ENCODE measurements at regions of chrX and their contacts with region 1.

Region 1: GRCh38 chrX:124217304-124218251 is 114.9 kb upstream of the TEX13D start:
- DNase-seq: peak; percentile 79
- ATAC-seq: peak; percentile 92
- H3K4me3 Mint-ChIP-seq: peak overlapping the region; percentile 71
- H3K27ac Mint-ChIP-seq: peak overlapping the region; percentile 96
- H3K4me1 Mint-ChIP-seq: peaks cover 85% of the 10 kb centered on the region
- H3K27me3 Mint-ChIP-seq: no peaks in the 10 kb centered on the region

Region 2: GRCh38 chrX:123878252-123878721 is 339.3 kb before region 1 on chrX:
- CTCF ChIA-PET with region 1: no interaction called
- POLR2A ChIA-PET with region 1: no interaction called
- intact Hi-C with region 1: loop called in 1 of 2 experiments (anchors 5 kb)
- DNase-seq: no peak
- ATAC-seq: peak; percentile 17
- H3K4me3 Mint-ChIP-seq: peak overlapping the region; percentile 8
- H3K27ac Mint-ChIP-seq: no peak overlapping the region
- H3K4me1 Mint-ChIP-seq: peaks cover 28% of the 10 kb centered on the region
- H3K27me3 Mint-ChIP-seq: no peaks in the 10 kb centered on the region

Region 3: DNA sequence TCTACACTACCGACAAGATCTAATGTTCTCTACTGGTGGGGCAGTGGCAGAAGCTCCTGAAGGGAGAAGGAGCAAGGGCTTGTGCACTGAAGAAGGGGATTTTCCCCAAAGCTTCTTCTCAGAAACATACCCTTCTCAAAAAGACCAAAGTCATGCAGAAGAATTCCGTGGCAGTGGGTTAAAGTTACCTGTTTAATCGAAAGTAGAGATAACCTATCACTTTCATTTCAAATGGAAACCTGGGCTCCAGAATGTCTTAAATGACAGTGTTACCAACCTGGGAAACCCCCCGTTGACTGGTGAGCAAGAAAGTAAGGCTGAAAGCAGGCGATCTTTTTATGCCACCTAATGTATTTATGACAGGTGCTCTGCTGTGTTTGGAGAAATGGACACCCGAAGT is 22.3 kb after region 1 on chrX:
- CTCF ChIA-PET with region 1: interaction called, 4 read pairs
- POLR2A ChIA-PET with region 1: interaction called, 7 read pairs
- intact Hi-C with region 1: loop called (anchors 1 kb)
- DNase-seq: peak; percentile 72
- ATAC-seq: peak; percentile 79
- H3K4me3 Mint-ChIP-seq: peak overlapping the region; percentile 31
- H3K27ac Mint-ChIP-seq: peak overlapping the region; percentile 75
- H3K4me1 Mint-ChIP-seq: peaks cover 45% of the 10 kb centered on the region
- H3K27me3 Mint-ChIP-seq: peaks cover 2% of the 10 kb centered on the region

Region 4: GRCh38 chrX:124300405-124300804 is 82.8 kb after region 1 on chrX:
- CTCF ChIA-PET with region 1: no interaction called
- POLR2A ChIA-PET with region 1: no interaction called
- intact Hi-C with region 1: loop called (anchors 5 kb)
- DNase-seq: no peak
- ATAC-seq: peak; percentile 70
- H3K4me3 Mint-ChIP-seq: peak overlapping the region; percentile 38
- H3K27ac Mint-ChIP-seq: peak overlapping the region; percentile 60
- H3K4me1 Mint-ChIP-seq: peaks cover 19% of the 10 kb centered on the region
- H3K27me3 Mint-ChIP-seq: no peaks in the 10 kb centered on the region

Region 5: DNA sequence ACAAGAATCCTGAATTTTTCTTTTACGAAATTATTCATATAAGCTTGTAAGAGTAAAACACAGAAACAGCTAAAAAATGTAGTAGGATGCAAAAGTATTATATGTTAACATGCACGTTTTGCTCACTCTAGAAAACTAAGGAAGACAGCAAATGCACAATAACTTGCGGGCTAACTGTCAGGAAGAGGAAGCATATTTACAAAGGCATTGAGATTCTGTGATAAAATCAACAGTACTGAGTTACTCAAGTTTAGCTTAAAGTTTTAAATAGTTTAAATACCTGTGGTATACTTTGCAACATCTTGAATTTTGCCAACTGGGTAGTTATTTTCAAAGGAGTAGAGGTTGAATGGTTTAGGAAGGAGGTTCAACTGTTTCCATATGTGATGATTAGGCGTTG is 165.8 kb after region 1 on chrX:
- CTCF ChIA-PET with region 1: no interaction called
- POLR2A ChIA-PET with region 1: no interaction called
- intact Hi-C with region 1: no loop called
- DNase-seq: no peak
- ATAC-seq: no peak
- H3K4me3 Mint-ChIP-seq: no peak overlapping the region
- H3K27ac Mint-ChIP-seq: no peak overlapping the region
- H3K4me1 Mint-ChIP-seq: peaks cover 34% of the 10 kb centered on the region
- H3K27me3 Mint-ChIP-seq: no peaks in the 10 kb centered on the region

Region 6: DNA sequence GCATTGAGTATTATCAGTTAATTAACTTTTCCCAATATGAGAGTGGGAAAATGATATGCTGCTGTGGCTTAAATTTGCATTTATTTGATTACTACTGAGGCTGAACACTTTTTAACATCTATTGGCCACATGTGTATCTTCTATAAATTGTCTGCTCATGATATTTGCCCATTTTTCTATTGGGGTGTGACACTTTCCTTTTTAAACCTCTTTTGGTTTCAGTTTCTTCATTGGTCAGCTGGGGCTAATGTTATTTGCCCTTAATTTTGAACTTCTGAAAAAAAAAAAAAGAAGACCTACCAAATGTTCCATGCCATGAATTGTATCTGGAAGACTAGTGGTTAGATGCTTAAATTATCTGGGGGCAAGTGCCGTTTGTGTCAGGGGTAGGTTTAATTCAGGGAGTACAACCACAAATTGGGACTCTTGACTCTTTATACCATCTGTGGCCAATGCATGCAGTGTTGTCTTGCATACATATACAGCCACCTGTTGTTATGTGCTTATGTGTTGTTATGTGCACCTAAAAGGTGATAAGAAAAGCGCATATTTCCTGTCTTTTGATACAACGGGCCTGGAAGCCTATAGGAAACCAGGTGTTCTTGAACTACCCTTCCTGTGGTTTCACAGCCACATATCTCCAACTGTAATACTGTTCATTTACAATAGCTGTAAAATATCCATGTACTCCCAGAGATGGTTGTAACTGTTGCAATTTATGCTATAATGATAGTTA is 177.7 kb after region 1 on chrX:
- CTCF ChIA-PET with region 1: no interaction called
- POLR2A ChIA-PET with region 1: interaction called, 12 read pairs
- intact Hi-C with region 1: loop called in 1 of 2 experiments (anchors 2 kb)
- DNase-seq: no peak
- ATAC-seq: no peak
- H3K4me3 Mint-ChIP-seq: no peak overlapping the region
- H3K27ac Mint-ChIP-seq: peak overlapping the region; percentile 47
- H3K4me1 Mint-ChIP-seq: peaks cover 29% of the 10 kb centered on the region
- H3K27me3 Mint-ChIP-seq: no peaks in the 10 kb centered on the region